ENCODE measurements at regions of chr11 and their contacts with region 1.

Region 1: DNA sequence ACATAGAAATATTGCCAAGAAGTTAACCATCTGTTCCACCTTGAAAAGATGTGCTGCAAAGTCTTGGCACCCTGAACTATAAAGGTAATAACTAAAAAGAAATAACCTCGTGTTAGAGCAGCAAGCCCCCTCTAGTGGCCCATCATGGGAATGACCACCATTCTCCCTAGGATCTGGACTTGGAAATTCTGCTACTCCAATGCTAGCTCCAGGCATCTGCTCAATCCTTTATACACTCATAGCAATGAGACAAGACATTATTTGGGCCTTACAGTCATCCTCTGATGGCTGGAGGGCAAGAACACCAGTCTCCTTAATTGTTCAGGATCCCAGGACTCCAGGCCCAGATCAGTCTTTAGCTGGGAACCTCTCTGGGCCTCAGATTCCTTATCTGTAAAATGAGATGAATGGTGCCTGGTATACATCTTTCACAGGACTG is 76.0 kb downstream of the CWC15 start:
- DNase-seq: no peak
- ATAC-seq: peak; percentile 69 to 75
- H3K4me3 ChIP-seq: no peak overlapping the region
- H3K27ac ChIP-seq: no peak overlapping the region
- H3K4me1 ChIP-seq: no peaks in the 10 kb centered on the region
- H3K27me3 ChIP-seq: no peaks in the 10 kb centered on the region
- CTCF ChIP-seq: peak; percentile 87

Region 2: DNA sequence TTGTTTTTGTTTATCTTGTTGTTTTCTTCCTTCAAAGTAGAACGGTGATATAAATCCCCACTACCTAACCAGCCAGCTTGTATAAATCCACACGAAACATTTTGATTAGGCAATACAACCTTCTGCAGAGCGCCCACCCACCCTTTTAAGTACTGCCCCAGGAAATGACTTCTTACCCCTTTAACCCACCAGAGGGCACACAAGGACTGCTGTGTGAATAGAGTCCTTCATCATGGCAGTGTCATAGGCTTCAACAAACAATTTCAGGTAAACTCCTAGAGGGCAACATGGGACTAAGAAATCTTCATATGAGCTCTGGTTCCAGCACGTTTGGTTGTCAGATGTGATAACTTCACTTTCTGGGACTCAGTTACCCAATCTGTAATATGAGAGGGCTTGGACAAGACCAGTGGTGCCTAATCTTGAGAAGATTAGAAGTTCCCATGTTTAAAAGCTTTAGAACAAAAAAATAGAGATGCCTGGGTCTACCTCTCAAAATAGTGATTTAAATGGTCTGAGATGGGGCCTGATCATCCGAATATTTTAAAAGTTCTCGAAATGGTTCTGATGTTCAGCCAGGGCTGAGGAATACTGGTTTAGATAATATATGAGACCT is 274.1 kb before region 1 on chr11:
- intact Hi-C with region 1: loop called (anchors 5 kb)
- DNase-seq: no peak
- ATAC-seq: peak; percentile 93 to 97
- H3K4me3 ChIP-seq: no peak overlapping the region
- H3K27ac ChIP-seq: no peak overlapping the region
- H3K4me1 ChIP-seq: no peaks in the 10 kb centered on the region
- H3K27me3 ChIP-seq: no peaks in the 10 kb centered on the region
- CTCF ChIP-seq: peak; percentile 77

Measured in lower lobe of right lung (tissue), 2 donors.